Prostate gland (tissue), 2 donors: ENCODE measurements at regions of chr2 and their contacts with region 1.

Region 1: DNA sequence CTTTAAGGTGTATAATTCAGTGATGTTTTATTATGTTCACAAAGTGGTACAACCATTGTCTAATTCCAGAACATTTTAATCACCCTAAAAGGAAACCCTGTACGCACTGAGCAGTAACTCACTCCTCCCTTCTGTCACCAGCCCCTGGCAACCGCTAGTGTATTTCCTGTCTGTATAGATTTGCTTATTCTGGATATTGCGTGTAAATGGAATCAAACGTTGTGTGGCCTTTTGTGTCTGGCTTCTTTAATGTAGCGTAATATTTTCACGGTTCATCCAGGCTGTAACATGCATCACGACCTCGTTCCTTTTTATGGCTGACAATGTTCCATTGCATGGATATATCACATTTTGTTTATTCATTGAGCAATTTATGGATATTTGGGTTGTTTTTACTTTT is 8.3 kb downstream of the ZDBF2 start:
- DNase-seq: no peak
- H3K4me3 ChIP-seq: no peak overlapping the region
- H3K27ac ChIP-seq: no peak overlapping the region
- H3K4me1 ChIP-seq: no peaks in the 10 kb centered on the region
- H3K27me3 ChIP-seq: no peaks in the 10 kb centered on the region
- CTCF ChIP-seq: no peak
- POLR2A ChIP-seq: no peak

Region 2: GRCh38 chr2:206064077-206064476 is 218.7 kb before region 1 on chr2:
- intact Hi-C with region 1: loop called (anchors 5 kb)
- DNase-seq: no peak
- H3K4me3 ChIP-seq: no peak overlapping the region
- H3K27ac ChIP-seq: no peak overlapping the region
- H3K4me1 ChIP-seq: no peaks in the 10 kb centered on the region
- H3K27me3 ChIP-seq: no peaks in the 10 kb centered on the region
- CTCF ChIP-seq: no peak
- POLR2A ChIP-seq: no peak